ENCODE measurements at regions of chr21 and their contacts with region 1.

Region 1: DNA sequence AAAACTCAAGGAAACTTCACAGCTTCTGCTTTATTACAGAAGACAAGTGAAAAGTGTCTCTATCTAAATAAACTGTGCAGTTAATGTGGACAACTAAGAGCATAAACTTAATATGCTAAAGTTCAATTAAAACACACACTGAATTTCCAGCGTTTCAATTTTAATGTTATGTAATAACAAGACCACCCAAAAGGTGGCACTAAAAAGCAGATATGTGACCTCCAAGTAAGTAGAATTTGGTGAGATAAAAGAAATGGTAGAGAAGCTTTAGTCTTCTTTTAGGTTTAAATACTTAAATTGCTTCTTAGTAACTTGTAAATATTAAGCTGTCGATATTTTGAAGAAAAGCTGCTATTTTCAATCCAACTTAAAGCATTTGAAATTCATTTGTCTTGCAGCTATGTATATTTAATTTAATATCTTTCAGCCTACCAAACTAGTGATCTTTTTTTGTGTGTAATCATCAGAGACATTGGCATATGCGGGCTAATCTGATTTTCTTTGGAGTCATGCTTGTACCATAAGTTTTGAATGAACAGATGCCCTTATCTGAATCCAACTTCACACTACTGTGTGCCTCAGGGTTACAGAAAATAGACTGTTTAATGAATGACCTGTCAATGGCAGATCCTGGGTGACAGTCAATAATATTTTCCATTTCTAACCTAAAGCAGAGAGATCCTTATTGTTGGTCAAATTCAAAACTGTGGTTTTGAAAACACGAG is 36.5 kb upstream of the ADAMTS1 start:
- H3K4me3 ChIP-seq: no peak overlapping the region
- H3K27ac ChIP-seq: no peak overlapping the region
- H3K4me1 ChIP-seq: peaks cover 5% of the 10 kb centered on the region
- CTCF ChIP-seq: no peak

Region 2: GRCh38 chr21:26850108-26850643 is 31.5 kb before region 1 on chr21:
- CTCF ChIA-PET with region 1: interaction called, 13 read pairs
- POLR2A ChIA-PET with region 1: no interaction called
- H3K4me3 ChIP-seq: no peak overlapping the region
- H3K27ac ChIP-seq: no peak overlapping the region
- H3K4me1 ChIP-seq: no peaks in the 10 kb centered on the region; the same call in 1 of the 2 replicates
- CTCF ChIP-seq: peak; percentile 42; the same call in 1 of the 2 replicates

Region 3: GRCh38 chr21:26909972-26910371 is 28.3 kb after region 1 on chr21:
- CTCF ChIA-PET with region 1: interaction called, 14 read pairs
- POLR2A ChIA-PET with region 1: no interaction called
- H3K4me3 ChIP-seq: no peak overlapping the region
- H3K27ac ChIP-seq: no peak overlapping the region
- H3K4me1 ChIP-seq: no peaks in the 10 kb centered on the region
- CTCF ChIP-seq: no peak

Region 4: GRCh38 chr21:26961698-26962097 is 80.0 kb after region 1 on chr21:
- CTCF ChIA-PET with region 1: interaction called, 14 read pairs
- POLR2A ChIA-PET with region 1: no interaction called
- H3K4me3 ChIP-seq: no peak overlapping the region
- H3K27ac ChIP-seq: no peak overlapping the region
- H3K4me1 ChIP-seq: peaks cover 3% of the 10 kb centered on the region; the same call in 1 of the 2 replicates
- CTCF ChIP-seq: no peak

Region 5: GRCh38 chr21:27213303-27213702 is 331.6 kb after region 1 on chr21:
- CTCF ChIA-PET with region 1: interaction called, 13 read pairs
- POLR2A ChIA-PET with region 1: no interaction called
- H3K4me3 ChIP-seq: no peak overlapping the region
- H3K27ac ChIP-seq: no peak overlapping the region
- H3K4me1 ChIP-seq: 0 out of 2 replicates have a peak, but pooled peaks cover 3% of the 10 kb centered on the region
- CTCF ChIP-seq: no peak

Region 6: GRCh38 chr21:27564684-27565301 is 683.1 kb after region 1 on chr21:
- CTCF ChIA-PET with region 1: interaction called, 32 read pairs
- POLR2A ChIA-PET with region 1: no interaction called
- H3K4me3 ChIP-seq: no peak overlapping the region
- H3K27ac ChIP-seq: no peak overlapping the region
- H3K4me1 ChIP-seq: no peaks in the 10 kb centered on the region
- CTCF ChIP-seq: no peak

Region 7: GRCh38 chr21:27700974-27701614 is 819.4 kb after region 1 on chr21:
- CTCF ChIA-PET with region 1: interaction called, 13 read pairs
- POLR2A ChIA-PET with region 1: no interaction called
- H3K4me3 ChIP-seq: no peak overlapping the region; the same call in 1 of the 2 replicates
- H3K27ac ChIP-seq: no peak overlapping the region
- H3K4me1 ChIP-seq: no peaks in the 10 kb centered on the region
- CTCF ChIP-seq: peak; percentile 60

Measured in HEK293 (cell line).